Caco-2 (cell line): ENCODE measurements at regions of chr1 and their contacts with region 1.

Region 1: GRCh38 chr1:89483010-89483756 is 41.4 kb upstream of the LRRC8B start:
- DNase-seq: peak; percentile 47 to 50
- H3K4me3 ChIP-seq: no peak overlapping the region
- H3K4me3 Mint-ChIP-seq: no peak overlapping the region
- H3K27ac Mint-ChIP-seq: no peak overlapping the region
- H3K4me1 ChIP-seq: no peaks in the 10 kb centered on the region
- H3K4me1 Mint-ChIP-seq: no peaks in the 10 kb centered on the region
- H3K27me3 ChIP-seq: no peaks in the 10 kb centered on the region
- H3K27me3 Mint-ChIP-seq: no peaks in the 10 kb centered on the region
- CTCF ChIP-seq: peak; percentile 61 to 63

Region 2: DNA sequence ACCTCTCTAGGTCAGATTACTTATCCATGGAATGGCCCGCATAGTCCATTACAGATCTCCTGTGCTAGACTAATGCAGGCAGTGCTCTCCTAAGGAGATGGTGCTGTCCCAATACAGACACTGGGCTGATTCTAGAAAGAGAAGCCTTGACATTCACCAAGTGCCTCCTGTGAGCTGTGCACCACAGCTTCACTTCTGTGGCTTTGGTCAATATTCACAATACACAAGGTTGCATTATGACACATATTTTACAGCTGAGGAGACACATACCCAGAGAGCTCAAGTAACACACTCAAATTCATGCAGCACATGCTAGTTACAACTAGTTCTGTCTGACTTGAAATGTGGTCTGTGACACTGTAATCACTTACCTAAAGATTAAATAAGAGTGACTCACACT is 18.0 kb before region 1 on chr1:
- CTCF ChIA-PET with region 1: no interaction called
- POLR2A ChIA-PET with region 1: no interaction called
- intact Hi-C with region 1: no loop called
- DNase-seq: no peak
- H3K4me3 ChIP-seq: no peak overlapping the region
- H3K4me3 Mint-ChIP-seq: no peak overlapping the region
- H3K27ac Mint-ChIP-seq: no peak overlapping the region
- H3K4me1 ChIP-seq: no peaks in the 10 kb centered on the region
- H3K4me1 Mint-ChIP-seq: peaks cover 16% of the 10 kb centered on the region
- H3K27me3 ChIP-seq: no peaks in the 10 kb centered on the region
- H3K27me3 Mint-ChIP-seq: no peaks in the 10 kb centered on the region
- CTCF ChIP-seq: no peak

Region 3: GRCh38 chr1:89598450-89599331 is 115.5 kb after region 1 on chr1:
- CTCF ChIA-PET with region 1: no interaction called
- POLR2A ChIA-PET with region 1: no interaction called
- intact Hi-C with region 1: loop called (anchors 1 kb)
- DNase-seq: peak in 1 of 2 experiments; percentile 21
- H3K4me3 ChIP-seq: no peak overlapping the region
- H3K4me3 Mint-ChIP-seq: no peak overlapping the region
- H3K27ac Mint-ChIP-seq: no peak overlapping the region
- H3K4me1 ChIP-seq: no peaks in the 10 kb centered on the region
- H3K4me1 Mint-ChIP-seq: no peaks in the 10 kb centered on the region
- H3K27me3 ChIP-seq: no peaks in the 10 kb centered on the region
- H3K27me3 Mint-ChIP-seq: no peaks in the 10 kb centered on the region
- CTCF ChIP-seq: peak; percentile 35 to 46

Region 4: DNA sequence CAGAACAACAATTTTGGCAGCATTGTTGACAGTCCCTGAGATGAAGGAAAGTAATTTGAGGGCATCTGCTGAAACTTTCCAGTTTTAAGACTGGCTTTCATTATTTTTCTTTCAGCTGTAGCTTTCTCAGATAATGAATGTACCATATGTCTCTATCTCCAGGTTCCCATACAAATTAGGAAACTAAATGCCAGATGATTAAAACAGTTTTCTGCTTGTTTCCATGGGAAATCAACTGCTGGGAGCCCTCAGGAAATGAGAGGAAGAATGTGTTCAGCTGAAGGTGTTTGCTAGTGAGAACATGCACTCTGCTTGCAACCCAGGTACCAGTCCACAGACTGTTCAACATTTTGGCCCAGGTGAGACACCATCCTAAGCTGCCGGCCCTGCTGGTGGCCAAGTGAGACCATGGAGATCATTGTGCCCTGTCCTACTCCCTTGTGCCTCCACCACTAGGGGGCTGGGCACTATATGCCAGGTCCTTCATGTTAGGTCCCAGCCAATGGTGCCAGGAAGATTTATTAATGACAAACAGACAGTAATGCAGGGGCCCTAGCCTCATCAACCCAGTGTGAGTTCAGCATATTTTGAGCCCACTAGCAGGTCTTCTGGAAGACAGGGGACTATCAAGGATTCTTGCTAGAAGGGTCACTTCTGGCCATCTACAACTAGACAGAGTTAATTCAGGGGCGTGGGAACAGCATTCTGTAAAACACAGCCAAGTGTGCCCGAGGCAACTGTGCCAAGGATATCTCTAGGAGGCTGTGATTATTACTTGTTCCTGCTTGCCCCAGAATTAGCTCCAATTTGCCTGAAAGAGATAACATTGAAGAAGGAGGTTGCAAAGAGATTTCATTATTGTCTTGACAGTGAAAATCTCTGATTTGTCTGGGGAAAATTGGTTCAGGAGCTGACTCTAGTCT is 132.8 kb after region 1 on chr1:
- CTCF ChIA-PET with region 1: no interaction called
- POLR2A ChIA-PET with region 1: no interaction called
- intact Hi-C with region 1: loop called (anchors 5 kb)
- DNase-seq: no peak
- H3K4me3 ChIP-seq: no peak overlapping the region
- H3K4me3 Mint-ChIP-seq: no peak overlapping the region
- H3K27ac Mint-ChIP-seq: no peak overlapping the region
- H3K4me1 ChIP-seq: no peaks in the 10 kb centered on the region
- H3K4me1 Mint-ChIP-seq: no peaks in the 10 kb centered on the region
- H3K27me3 ChIP-seq: no peaks in the 10 kb centered on the region
- H3K27me3 Mint-ChIP-seq: peaks cover 4% of the 10 kb centered on the region
- CTCF ChIP-seq: peak; percentile 22

Region 5: DNA sequence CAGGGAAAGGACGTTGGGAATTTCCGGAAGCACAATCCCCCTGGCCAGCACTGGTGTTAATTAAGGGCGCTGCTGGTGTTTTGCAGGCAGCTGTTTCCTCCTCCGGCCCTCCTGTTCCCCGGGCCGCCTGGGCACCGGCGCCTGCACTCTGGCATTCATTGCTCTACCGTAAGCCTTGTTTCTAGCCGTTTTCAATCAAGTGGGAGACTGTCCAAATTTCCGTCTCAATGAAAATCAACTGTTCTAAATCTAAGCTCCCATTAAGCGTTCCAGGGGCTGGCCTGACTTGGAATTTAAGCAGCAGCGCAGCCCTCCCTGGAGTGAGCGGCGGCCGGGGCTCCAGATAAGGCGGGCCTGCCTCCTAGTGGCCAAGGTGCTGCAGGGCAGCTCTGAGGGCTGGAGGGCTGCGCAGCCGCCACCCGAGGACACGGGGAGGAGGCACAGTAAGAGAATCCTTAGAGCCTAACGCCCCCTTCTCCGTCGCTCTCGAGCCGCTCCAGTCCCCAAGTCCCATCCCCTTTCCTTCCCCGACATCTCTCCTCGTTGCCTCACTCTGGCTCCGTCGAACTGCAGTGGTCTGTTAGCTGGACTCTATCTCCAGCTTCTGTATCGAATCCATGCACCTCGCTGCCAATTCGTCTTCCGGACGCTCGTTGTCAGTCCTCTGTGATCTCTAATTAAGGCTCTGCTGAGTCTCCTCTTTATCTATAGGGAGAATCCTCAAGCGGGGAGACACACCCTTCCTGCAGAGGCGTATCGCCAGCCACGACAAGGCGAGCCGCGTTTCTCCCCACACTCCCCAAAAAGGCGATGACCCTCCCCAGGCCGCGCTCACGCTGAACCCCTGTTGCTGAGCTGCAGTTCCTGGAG is 279.8 kb after region 1 on chr1:
- CTCF ChIA-PET with region 1: interaction called, 4 read pairs
- POLR2A ChIA-PET with region 1: no interaction called
- intact Hi-C with region 1: loop called (anchors 1 kb)
- DNase-seq: peak; percentile 70 to 77
- H3K4me3 ChIP-seq: peak overlapping the region; percentile 30
- H3K4me3 Mint-ChIP-seq: peak overlapping the region; percentile 75
- H3K27ac Mint-ChIP-seq: no peak overlapping the region
- H3K4me1 ChIP-seq: no peaks in the 10 kb centered on the region
- H3K4me1 Mint-ChIP-seq: no peaks in the 10 kb centered on the region
- H3K27me3 ChIP-seq: no peaks in the 10 kb centered on the region
- H3K27me3 Mint-ChIP-seq: peaks cover 3% of the 10 kb centered on the region
- CTCF ChIP-seq: peak; percentile 78 to 84

Region 6: DNA sequence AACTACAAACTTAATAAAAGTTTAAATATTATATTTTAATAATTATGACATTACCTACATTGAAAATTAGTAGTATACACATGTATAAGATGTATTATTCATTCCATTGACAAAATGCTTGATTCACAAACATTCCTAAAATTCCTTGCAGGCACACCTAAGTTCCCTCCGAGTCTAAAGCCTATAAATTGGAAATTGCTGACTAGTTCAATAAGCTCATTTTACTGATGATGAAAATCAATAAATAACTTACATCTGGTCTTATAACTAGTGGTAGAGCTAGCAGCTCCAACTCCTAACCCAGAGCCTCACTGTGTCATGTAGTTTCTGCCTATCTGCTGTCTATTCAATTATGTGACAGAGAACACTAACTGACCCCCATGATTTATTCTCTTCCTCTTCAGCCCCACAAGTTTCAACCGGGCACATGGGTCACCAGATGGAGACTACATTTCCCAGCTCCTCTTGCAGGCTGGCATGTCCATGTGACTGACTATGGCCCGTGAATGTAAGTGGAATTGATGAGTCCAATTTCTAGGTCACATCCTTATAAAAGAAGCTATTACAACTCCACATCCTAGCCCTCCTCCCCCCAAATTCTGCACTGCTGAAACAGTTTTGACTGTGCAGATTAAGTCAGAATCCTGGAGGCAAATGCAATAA is 308.0 kb after region 1 on chr1:
- CTCF ChIA-PET with region 1: no interaction called
- POLR2A ChIA-PET with region 1: no interaction called
- intact Hi-C with region 1: no loop called
- DNase-seq: no peak
- H3K4me3 ChIP-seq: no peak overlapping the region
- H3K4me3 Mint-ChIP-seq: no peak overlapping the region
- H3K27ac Mint-ChIP-seq: no peak overlapping the region
- H3K4me1 ChIP-seq: no peaks in the 10 kb centered on the region
- H3K4me1 Mint-ChIP-seq: no peaks in the 10 kb centered on the region
- H3K27me3 ChIP-seq: no peaks in the 10 kb centered on the region
- H3K27me3 Mint-ChIP-seq: no peaks in the 10 kb centered on the region
- CTCF ChIP-seq: no peak